CD4-positive, alpha-beta T cell (primary cell): ENCODE measurements at regions of chr6 and their contacts with region 1.

Region 1: GRCh38 chr6:41344876-41345275 is 9.5 kb downstream of the NCR2 start:
- DNase-seq: peak in 9 of 14 experiments; percentile 9 to 72 (median 31)
- ATAC-seq: peak; percentile 97
- H3K4me3 ChIP-seq: no peak overlapping the region
- H3K4me3 Mint-ChIP-seq: no peak overlapping the region
- H3K27ac ChIP-seq: peak overlapping the region; percentile 3 to 29
- H3K27ac Mint-ChIP-seq: peak overlapping the region; percentile 74
- H3K4me1 ChIP-seq: peaks cover 17% of the 10 kb centered on the region
- H3K4me1 Mint-ChIP-seq: peaks cover 29% of the 10 kb centered on the region
- H3K27me3 ChIP-seq: no peaks in the 10 kb centered on the region
- H3K27me3 Mint-ChIP-seq: peaks cover 2% of the 10 kb centered on the region
- CTCF ChIP-seq: no peak

Region 2: DNA sequence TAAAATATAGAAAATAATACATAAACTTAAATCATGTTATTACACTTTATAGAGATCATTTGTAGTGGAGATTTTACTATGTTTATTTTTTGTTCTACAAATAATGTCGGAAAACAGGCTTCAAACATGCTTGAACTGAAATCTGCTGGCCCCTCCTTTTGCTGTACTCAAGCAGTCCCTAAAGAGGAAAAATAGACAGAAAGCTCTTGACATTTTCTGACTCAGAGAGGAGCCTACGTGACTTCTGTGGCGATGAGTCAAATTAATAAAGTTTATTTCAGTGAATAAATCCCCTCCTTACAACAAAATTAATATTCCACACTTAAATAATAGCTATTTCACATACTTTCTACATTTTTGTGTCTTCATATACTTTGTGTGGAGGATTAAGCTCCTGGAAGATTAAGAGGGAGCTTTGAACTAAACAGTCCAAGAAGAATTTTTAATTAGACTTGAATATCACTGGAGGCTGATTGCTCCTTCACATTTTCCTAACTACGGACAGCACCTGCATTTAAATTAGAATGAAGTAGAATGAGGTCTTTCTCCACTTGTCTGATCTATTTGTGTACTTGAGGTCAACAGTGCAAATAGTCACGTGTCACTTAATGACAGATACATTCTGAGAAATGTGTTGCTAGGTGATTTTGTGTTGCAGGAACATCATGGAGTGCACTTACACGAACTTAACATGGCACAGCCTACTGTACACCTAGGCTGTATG is 56.7 kb before region 1 on chr6:
- CTCF ChIA-PET with region 1: no interaction called
- POLR2A ChIA-PET with region 1: no interaction called
- intact Hi-C with region 1: no loop called
- DNase-seq: peak in 1 of 14 experiments; percentile 20
- ATAC-seq: no peak
- H3K4me3 ChIP-seq: no peak overlapping the region
- H3K4me3 Mint-ChIP-seq: no peak overlapping the region
- H3K27ac ChIP-seq: no peak overlapping the region
- H3K27ac Mint-ChIP-seq: no peak overlapping the region
- H3K4me1 ChIP-seq: no peaks in the 10 kb centered on the region
- H3K4me1 Mint-ChIP-seq: no peaks in the 10 kb centered on the region
- H3K27me3 ChIP-seq: no peaks in the 10 kb centered on the region
- H3K27me3 Mint-ChIP-seq: peaks cover 5% of the 10 kb centered on the region
- CTCF ChIP-seq: no peak

Region 3: DNA sequence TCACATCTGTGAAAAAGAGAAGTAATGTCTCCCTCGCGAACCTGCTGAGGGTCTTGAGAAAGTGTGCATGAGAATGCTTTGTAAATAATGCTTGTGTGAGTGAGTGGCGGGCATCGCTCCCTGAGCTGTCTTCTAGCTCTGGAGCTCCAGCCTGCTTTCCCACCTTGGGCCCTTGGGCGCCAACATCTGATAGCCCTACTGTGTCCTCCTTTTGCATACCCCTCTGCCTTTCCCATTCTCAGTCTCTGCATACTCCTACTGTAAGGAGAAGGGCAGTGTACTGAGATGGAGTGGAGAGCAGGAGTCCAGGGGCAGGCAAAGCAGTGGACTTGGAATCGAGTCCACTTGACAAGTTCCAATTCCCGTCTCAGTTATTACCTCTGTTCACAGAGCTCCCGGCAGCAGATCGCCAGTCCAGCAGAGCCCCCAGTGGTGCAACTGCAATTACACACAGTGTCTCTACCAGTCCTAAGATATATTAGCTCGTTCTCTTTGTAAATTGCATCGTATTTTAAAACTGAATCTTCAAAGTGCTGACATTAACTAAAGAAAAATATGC is 10.3 kb before region 1 on chr6:
- CTCF ChIA-PET with region 1: no interaction called
- POLR2A ChIA-PET with region 1: interaction called, 17 read pairs
- intact Hi-C with region 1: no loop called
- DNase-seq: peak in 1 of 14 experiments; percentile 37
- ATAC-seq: no peak
- H3K4me3 ChIP-seq: no peak overlapping the region
- H3K4me3 Mint-ChIP-seq: peak overlapping the region; percentile 52
- H3K27ac ChIP-seq: peak overlapping the region; percentile 42 to 65
- H3K27ac Mint-ChIP-seq: peak overlapping the region; percentile 93
- H3K4me1 ChIP-seq: peaks cover 45% of the 10 kb centered on the region
- H3K4me1 Mint-ChIP-seq: peaks cover 43% of the 10 kb centered on the region
- H3K27me3 ChIP-seq: no peaks in the 10 kb centered on the region
- H3K27me3 Mint-ChIP-seq: no peaks in the 10 kb centered on the region
- CTCF ChIP-seq: no peak